ENCODE measurements at regions of chr9 and their contacts with region 1.

Region 1: GRCh38 chr9:127869310-127870152 is 7.9 kb downstream of the AK1 start:
- DNase-seq: no peak
- H3K4me3 ChIP-seq: no peak overlapping the region
- H3K27me3 ChIP-seq: no peaks in the 10 kb centered on the region
- CTCF ChIP-seq: peak; percentile 90

Region 2: GRCh38 chr9:127742435-127743088 is 127.0 kb before region 1 on chr9:
- CTCF ChIA-PET with region 1: interaction called, 44 read pairs
- POLR2A ChIA-PET with region 1: no interaction called
- DNase-seq: peak; percentile 35
- H3K4me3 ChIP-seq: peak overlapping the region; percentile 34
- H3K27me3 ChIP-seq: peaks cover 4% of the 10 kb centered on the region
- CTCF ChIP-seq: no peak

Region 3: DNA sequence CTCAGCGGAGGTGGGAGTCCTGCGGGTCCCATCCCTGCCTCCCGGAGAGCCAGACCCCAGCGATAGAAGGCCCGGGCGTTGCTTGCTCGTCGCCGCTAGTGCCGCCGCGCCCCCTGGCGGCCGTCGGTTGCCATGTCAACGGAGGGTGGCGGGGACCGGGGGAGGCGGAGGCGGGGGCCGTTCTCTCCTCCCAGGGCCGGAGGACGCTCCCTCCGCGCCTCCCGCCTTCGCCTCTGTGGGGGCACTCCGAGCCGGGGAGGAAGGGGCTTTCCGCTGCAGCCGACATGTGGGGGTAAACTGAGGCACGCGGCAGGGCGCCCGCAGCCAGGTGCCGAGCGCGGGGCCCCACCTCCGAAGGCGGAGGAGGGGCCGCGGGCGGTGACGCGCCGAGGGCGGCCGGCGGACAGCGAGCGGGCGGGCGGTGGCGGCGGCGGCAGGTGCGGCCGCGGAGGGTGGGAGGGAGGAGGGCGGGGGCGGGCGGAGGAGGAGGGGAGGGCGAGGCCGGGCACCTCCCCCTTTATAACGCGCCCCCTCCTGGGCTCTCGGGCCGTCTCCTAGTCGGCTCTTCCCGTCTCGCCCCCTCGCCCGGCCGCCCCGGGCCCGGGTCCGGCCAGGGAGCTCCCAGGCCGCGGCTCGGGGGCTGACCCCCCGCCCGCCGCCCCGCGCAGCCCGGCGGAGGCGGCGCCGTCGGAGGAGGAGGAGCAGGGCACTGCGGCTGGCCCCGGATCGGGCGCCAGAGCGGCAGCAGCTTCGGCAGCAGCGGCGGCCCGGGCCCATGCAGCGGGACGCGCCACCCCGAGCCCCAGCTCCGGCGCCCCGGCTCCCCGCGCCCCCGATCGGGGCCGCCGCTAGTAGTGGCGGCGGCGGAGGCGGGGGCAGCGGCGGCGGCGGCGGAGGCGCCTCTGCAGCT is 84.3 kb before region 1 on chr9:
- CTCF ChIA-PET with region 1: interaction called, 23 read pairs
- POLR2A ChIA-PET with region 1: no interaction called
- DNase-seq: no peak
- H3K4me3 ChIP-seq: peak overlapping the region; percentile 95
- H3K27me3 ChIP-seq: 0 out of 2 replicates have a peak, but pooled peaks cover under 1% of the 10 kb centered on the region
- CTCF ChIP-seq: peak; percentile 91

Region 4: GRCh38 chr9:127796225-127796813 is 73.2 kb before region 1 on chr9:
- CTCF ChIA-PET with region 1: interaction called, 18 read pairs
- POLR2A ChIA-PET with region 1: no interaction called
- DNase-seq: no peak
- H3K4me3 ChIP-seq: no peak overlapping the region
- H3K27me3 ChIP-seq: no peaks in the 10 kb centered on the region
- CTCF ChIP-seq: no peak

Region 5: GRCh38 chr9:127817881-127818434 is 51.6 kb before region 1 on chr9:
- CTCF ChIA-PET with region 1: interaction called, 10 read pairs
- POLR2A ChIA-PET with region 1: no interaction called
- DNase-seq: no peak
- H3K4me3 ChIP-seq: no peak overlapping the region
- H3K27me3 ChIP-seq: no peaks in the 10 kb centered on the region
- CTCF ChIP-seq: no peak

Region 6: DNA sequence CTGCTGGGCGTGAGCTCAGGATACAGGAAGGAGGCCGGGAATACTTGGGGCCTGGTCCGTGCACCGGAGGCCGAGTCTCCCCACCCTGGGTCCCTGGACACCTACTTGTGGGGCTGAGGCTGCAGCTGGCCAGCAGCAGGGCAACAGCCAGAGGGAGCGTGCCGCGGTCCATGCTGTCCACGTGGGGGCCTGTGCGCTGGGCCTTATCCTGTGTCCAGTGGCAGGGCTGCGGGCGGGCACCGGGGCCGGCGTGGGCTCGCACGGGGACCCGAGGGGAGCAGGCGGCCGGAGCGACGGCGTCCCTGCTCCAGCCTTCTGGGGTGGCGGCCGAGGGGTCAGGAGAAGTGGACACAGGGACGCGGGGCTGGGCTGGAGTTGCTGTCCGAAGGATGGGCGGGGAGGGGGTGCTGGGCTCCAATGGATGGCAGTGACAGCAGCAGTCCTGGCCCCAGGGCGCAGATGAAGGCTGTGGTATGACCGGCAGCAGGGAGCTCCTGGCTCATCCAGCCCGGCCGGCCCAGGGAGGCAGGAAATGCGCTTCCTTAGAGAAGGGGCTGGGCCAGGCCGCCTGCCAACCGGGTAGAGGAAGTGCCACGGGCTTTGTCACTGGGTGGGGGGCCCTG is 15.2 kb before region 1 on chr9 and contains the start of gene ENG:
- CTCF ChIA-PET with region 1: interaction called, 41 read pairs
- POLR2A ChIA-PET with region 1: no interaction called
- DNase-seq: no peak
- H3K4me3 ChIP-seq: peak within 1 kb of the TSS; percentile 44
- H3K27me3 ChIP-seq: no peaks in the 10 kb centered on the region
- CTCF ChIP-seq: 0 out of 2 replicates have a peak, but pooled peaks have one; percentile 18
- polyA plus RNA-seq, gene ENG: 23.3 and 44.6 TPM in 2 replicates

Region 7: DNA sequence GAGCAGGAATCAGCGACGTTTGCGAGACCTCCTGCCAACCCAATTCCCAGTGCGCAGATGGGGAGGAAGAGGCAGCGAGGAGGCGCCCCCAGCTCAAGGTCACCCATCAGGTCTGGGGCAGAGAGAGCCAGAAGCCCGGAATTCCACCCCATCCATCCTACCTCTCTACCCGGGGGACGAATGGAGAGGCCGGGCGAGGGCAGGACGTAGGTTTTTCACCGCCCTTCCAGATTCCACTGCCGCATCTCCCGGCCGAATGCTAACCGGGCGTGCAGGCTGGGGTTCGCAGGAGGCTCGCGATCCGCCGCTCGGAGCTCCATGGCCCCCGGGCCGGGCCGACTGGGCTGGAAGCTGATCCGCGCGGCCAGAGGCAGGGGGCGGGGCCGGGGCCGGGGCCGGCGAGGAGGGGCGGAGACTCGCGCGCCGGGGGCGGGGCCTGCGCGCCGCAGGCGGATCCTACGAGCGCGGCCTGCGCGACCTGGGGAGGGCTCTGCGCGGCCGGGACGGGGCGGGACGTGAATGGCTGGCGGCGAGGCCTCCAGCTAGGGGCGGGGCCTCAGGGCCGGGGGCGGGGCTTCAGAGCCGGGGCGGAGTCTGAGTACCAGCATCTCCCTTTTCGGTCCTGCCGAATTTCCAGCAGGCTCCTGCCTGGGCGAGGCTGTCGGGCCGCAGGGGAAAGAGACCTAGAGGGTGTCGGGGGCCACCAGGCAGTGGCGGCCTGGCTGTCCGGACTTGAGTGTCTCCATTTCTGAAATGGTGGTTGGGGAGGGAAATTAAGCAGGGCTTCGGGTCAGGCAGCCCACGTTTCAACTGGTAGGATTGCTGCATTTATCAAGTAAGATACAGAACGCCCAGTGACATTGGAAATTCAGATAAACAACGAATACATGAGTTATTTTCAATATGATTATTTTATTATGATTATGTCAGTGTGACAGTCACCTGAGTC is 47.4 kb after region 1 on chr9 and contains the start of gene ST6GALNAC4:
- CTCF ChIA-PET with region 1: interaction called, 16 read pairs
- POLR2A ChIA-PET with region 1: no interaction called
- DNase-seq: no peak
- H3K4me3 ChIP-seq: peak within 1 kb of the TSS; percentile 51
- H3K27me3 ChIP-seq: no peaks in the 10 kb centered on the region
- CTCF ChIP-seq: peak; percentile 5; the same call in 1 of the 2 replicates
- polyA plus RNA-seq, gene ST6GALNAC4: 21.4 and 35.5 TPM in 2 replicates

Measured in BJ (cell line).